Psoas muscle (tissue), 8 donors: ENCODE measurements at regions of chr17 and their contacts with region 1.

Region 1: GRCh38 chr17:45135192-45135977 is at the start of gene ACBD4:
- DNase-seq: peak; percentile 94 to 97
- ATAC-seq: peak; percentile 79 to 83 (median 82)
- H3K4me3 ChIP-seq: peak within 1 kb of the TSS; percentile 71
- H3K27ac ChIP-seq: peak within 1 kb of the TSS; percentile 69
- H3K4me1 ChIP-seq: peaks cover 14% of the 10 kb centered on the region
- H3K27me3 ChIP-seq: no peaks in the 10 kb centered on the region
- CTCF ChIP-seq: peak; percentile 100
- total RNA-seq, gene ACBD4: 3.9 to 8.2 (median 5.1) TPM

Region 2: DNA sequence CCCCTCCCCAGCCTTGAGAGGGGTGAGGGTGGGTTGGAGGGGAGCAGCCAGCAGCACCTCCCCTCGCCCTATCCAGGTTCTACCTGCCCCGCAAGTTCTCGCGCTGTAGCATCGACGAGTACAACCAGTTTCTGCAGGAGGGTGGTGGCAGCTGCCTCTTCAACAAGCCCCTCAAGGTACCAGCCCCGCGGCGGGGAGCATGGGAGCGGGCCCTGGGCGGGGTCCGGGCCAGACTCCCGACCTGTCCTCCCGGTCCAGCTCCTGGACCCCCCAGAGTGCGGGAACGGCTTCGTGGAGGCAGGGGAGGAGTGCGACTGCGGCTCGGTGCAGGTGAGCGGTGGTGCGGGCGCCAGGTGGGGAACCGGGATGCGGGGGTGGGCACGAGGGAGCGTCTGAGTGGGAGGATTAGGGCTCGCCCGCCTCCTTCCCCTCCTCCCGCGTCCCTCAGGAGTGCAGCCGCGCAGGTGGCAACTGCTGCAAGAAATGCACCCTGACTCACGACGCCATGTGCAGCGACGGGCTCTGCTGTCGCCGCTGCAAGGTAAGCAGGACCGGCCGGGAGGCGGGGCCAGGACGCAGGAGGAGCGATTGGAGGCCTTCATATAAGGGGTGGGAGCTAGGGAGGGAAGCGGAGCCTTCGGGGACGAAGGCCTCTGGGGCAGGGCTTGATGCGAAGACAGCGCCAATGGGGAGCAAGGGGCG is 360.1 kb before region 1 on chr17:
- intact Hi-C with region 1: loop called (anchors 5 to 10 kb)
- DNase-seq: peak; percentile 93 to 96
- ATAC-seq: peak; percentile 93 to 96 (median 95)
- H3K4me3 ChIP-seq: peak overlapping the region; percentile 66
- H3K27ac ChIP-seq: no peak overlapping the region
- H3K4me1 ChIP-seq: peaks cover 14% of the 10 kb centered on the region
- H3K27me3 ChIP-seq: peaks cover 0 to 20% (median 0%) of the 10 kb centered on the region in 3 donors
- CTCF ChIP-seq: no peak

Region 3: GRCh38 chr17:44900894-44901293 is 234.5 kb before region 1 on chr17:
- intact Hi-C with region 1: loop called in 1 of 2 experiments (anchors 5 kb)
- DNase-seq: no peak
- ATAC-seq: no peak
- H3K4me3 ChIP-seq: no peak overlapping the region
- H3K27ac ChIP-seq: no peak overlapping the region
- H3K4me1 ChIP-seq: peaks cover 20% of the 10 kb centered on the region
- H3K27me3 ChIP-seq: no peaks in the 10 kb centered on the region
- CTCF ChIP-seq: no peak

Region 4: DNA sequence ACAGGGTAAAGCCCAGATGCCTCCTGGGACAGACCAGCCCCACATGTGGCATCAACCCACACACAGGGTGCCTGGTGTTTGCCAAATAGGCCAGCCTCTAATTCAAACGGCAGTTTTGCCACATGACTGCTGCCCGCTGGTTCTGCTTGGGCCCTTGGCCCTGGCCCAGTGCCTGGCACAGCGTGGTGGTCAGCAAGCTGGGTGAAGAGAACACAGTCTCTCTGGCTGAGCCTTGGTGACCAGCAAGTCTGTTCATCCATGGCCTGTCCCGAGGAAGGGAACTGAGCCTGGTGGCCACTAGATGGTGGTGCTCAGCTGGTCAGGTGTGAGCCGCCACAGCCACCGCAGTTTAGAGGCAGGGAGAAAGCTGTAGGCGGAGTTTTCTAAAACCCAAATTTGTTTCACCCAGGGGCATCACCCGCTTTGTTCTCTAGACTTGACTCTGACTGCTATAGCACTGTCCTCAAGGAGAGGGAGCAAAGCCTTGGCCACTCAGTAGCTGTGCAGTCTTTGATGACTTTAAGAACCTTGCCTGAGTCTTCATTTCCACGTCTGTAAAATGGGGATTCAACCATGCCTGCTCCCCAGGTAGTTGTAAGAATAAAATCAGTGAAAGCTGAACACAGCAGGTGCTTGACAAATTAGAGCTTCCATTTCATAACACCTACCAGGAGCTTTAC is 215.4 kb before region 1 on chr17:
- intact Hi-C with region 1: loop called (anchors 2 to 5 kb)
- DNase-seq: peak; percentile 79 to 86
- ATAC-seq: peak; percentile 92 to 98 (median 96)
- H3K4me3 ChIP-seq: no peak overlapping the region
- H3K27ac ChIP-seq: no peak overlapping the region
- H3K4me1 ChIP-seq: no peaks in the 10 kb centered on the region
- H3K27me3 ChIP-seq: peaks cover 0 to 3% (median 0%) of the 10 kb centered on the region in 3 donors
- CTCF ChIP-seq: peak; percentile 83

Region 5: GRCh38 chr17:45051060-45051719 is 84.2 kb before region 1 on chr17 and contains the start of gene DCAKD:
- intact Hi-C with region 1: loop called in 1 of 2 experiments (anchors 5 kb)
- DNase-seq: peak; percentile 96 to 97
- ATAC-seq: peak; percentile 98 to 99 (median 99)
- H3K4me3 ChIP-seq: peak within 1 kb of the TSS; percentile 90
- H3K27ac ChIP-seq: peak within 1 kb of the TSS; percentile 97
- H3K4me1 ChIP-seq: peaks cover 23% of the 10 kb centered on the region
- H3K27me3 ChIP-seq: no peaks in the 10 kb centered on the region
- CTCF ChIP-seq: no peak
- total RNA-seq, gene DCAKD: 6.9 to 13.5 (median 11.0) TPM

Region 6: DNA sequence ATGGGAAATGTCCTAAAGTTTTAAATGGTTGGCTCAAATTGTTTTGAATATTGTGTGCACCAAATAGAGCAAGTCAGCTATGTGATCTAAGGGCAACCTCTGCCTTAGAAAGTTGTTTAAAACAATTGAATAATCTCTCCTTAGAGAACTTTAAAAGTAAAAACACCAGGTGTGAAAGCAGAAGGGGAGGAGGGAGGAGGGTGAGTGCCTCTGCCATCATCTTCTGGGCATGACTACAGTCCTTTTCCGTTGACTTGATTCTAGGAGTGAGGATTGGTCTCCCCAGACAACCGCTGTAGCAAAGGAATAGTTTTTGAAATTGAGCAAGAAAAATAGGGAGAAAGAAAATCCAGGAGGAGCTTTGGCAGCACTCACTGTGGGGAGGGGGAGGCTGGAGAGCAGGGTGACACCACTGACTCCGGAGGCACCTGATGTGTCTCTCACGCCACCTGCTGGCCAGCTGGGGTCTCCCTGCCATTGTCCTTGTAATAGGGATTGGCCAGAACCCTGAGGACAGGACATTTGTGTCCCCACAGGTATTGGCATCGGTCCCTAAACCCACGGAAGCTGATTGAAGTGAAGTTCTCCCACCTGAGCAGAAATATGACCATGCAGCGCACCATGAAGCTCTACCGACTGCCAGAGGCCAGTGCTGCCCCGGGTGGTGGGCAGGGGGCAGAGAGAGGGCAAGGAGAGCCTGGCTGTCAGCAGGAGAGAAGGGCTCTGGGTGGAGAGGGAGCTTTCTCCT is 36.3 kb before region 1 on chr17:
- intact Hi-C with region 1: loop called (anchors 2 to 5 kb)
- DNase-seq: peak; percentile 90 to 95
- ATAC-seq: peak; percentile 79 to 90 (median 82)
- H3K4me3 ChIP-seq: no peak overlapping the region
- H3K27ac ChIP-seq: peak overlapping the region; percentile 48
- H3K4me1 ChIP-seq: peaks cover 31% of the 10 kb centered on the region
- H3K27me3 ChIP-seq: no peaks in the 10 kb centered on the region
- CTCF ChIP-seq: peak; percentile 91

Region 7: DNA sequence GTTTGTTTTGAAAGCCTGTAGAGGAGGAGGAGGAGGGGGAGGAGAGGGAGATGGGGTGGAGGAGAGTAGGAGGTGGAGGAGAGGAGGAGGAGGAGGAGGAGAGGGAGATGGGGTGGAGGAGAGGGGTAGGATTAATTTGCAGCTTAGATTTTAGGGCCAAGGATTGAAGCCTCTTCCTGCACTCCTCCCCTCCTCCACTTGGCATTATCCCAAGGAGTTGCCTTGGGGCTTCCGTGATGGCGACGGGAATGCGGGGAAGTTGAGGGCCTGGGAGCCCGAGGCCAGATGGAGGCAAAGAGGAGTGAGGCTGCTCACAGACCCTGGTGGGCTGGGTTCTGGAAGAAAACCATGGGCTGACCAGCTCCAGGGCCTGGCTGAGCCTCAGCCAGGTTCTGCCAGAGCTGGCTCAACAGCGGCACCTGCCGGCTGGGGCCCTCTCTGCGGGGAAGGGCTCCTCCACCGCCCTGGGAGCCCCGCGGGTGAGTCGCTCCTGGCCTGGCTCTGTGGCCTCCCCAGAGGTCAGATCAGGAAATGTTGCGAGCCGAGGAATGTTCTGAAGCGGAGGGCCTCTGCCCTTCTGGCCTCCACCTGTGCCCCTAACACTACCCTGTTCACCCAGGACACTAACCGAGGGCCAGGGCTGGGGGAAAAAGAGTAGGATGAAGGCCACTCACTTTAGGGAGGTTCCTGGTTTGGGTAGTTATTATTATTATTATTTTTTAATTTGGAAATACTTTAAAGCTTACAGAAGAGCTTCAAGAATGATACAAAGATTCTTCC is 62.4 kb after region 1 on chr17:
- intact Hi-C with region 1: loop called (anchors 1 to 2 kb)
- DNase-seq: peak; percentile 95 to 97
- ATAC-seq: peak; percentile 98 to 100 (median 98)
- H3K4me3 ChIP-seq: no peak overlapping the region
- H3K27ac ChIP-seq: peak overlapping the region; percentile 56
- H3K4me1 ChIP-seq: peaks cover 4% of the 10 kb centered on the region
- H3K27me3 ChIP-seq: no peaks in the 10 kb centered on the region
- CTCF ChIP-seq: peak; percentile 98